A549 (cell line): ENCODE measurements at regions of chr5 and their contacts with region 1.

Region 1: DNA sequence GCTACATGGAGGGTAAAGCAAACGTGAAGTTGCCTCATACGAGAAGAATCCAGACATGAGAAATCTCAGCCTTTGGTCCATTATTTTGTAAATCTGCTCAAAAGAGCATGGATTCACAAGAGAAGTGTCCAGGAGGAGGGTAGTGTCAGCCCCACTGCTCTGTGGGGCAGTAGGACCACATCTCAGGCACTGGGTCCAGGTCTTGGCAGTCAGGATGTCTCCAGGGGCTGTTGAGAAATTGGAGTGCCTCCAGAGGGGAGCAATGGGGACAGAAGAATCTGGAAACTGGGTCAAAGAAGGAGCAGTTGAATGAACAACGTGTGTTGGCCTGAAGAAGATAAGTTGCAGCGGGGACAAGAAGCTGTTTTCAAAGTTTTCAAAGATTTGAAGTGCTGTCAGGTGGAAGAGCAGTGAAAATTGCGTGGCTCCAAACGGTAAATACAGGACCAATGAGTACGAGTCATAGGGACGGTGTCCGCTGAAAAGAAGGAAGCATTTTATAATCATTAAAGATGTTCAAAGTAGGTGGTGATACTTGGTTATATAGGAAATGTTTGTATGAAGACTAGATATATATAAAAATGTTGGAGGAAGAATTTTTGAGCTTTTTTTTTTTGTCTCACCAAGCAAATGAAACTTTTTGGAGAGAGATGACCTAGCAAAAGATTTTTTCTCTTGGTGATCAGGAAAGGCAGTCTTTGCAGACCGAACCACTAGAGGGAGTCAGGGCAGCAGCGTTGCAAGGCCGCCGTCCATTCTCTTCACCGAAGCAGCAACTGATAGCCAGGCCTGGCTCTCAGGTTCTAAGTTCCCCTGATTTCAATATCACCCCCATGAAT is 57.1 kb upstream of the ZBED3 start:
- DNase-seq: peak; percentile 55 to 85
- ATAC-seq: peak; percentile 90 to 97
- H3K4me3 ChIP-seq: no peak overlapping the region
- H3K27ac ChIP-seq: peak overlapping the region; percentile 58 to 80
- H3K4me1 ChIP-seq: peaks cover 28% of the 10 kb centered on the region
- CTCF ChIP-seq: peak; percentile 90
- EP300 ChIP-seq: no peak
- POLR2A ChIP-seq: no peak
- RAD21 ChIP-seq: peak; percentile 95 to 97

Region 2: GRCh38 chr5:77155179-77155785 is 11.1 kb after region 1 on chr5:
- CTCF ChIA-PET with region 1: interaction called, 31 read pairs
- POLR2A ChIA-PET with region 1: no interaction called
- DNase-seq: no peak
- ATAC-seq: no peak
- H3K4me3 ChIP-seq: no peak overlapping the region
- H3K27ac ChIP-seq: no peak overlapping the region
- H3K4me1 ChIP-seq: no peaks in the 10 kb centered on the region
- CTCF ChIP-seq: no peak
- EP300 ChIP-seq: no peak
- POLR2A ChIP-seq: no peak
- RAD21 ChIP-seq: no peak

Region 3: GRCh38 chr5:77175231-77175630 is 31.0 kb after region 1 on chr5:
- CTCF ChIA-PET with region 1: interaction called, 11 read pairs
- POLR2A ChIA-PET with region 1: no interaction called
- DNase-seq: no peak
- ATAC-seq: no peak
- H3K4me3 ChIP-seq: no peak overlapping the region
- H3K27ac ChIP-seq: peak overlapping the region; percentile 47 to 58; a peak in 5 of 6 replicates
- H3K4me1 ChIP-seq: peaks cover 37% of the 10 kb centered on the region
- CTCF ChIP-seq: no peak
- EP300 ChIP-seq: no peak
- POLR2A ChIP-seq: no peak
- RAD21 ChIP-seq: no peak

Region 4: DNA sequence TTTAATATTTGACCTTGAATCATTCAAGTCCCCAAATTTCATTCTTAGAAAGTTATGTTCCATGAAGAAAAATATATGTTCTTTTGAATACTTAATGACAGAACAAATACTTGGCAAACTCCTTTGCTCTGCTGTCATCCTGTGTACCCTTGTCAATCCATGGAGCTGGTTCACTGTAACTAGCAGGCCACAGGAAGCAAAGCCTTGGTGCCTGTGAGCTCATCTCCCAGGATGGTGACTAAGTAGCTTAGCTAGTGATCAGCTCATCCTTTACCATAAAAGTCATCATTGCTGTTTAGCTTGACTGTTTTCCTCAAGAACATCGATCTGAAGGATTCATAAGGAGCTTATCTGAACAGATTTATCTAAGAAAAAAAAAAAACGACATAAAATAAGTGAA is 282.5 kb after region 1 on chr5:
- CTCF ChIA-PET with region 1: interaction called, 15 read pairs
- POLR2A ChIA-PET with region 1: no interaction called
- DNase-seq: peak; percentile 13 to 39
- ATAC-seq: peak; percentile 66 to 68; a peak in 4 of 6 replicates
- H3K4me3 ChIP-seq: no peak overlapping the region
- H3K27ac ChIP-seq: peak overlapping the region; percentile 23 to 52; a peak in 4 of 6 replicates
- H3K4me1 ChIP-seq: peaks cover 35% of the 10 kb centered on the region
- CTCF ChIP-seq: no peak
- EP300 ChIP-seq: no peak
- POLR2A ChIP-seq: no peak
- RAD21 ChIP-seq: no peak

Region 5: GRCh38 chr5:77491783-77492652 is 347.8 kb after region 1 on chr5 and contains the start of gene WDR41:
- CTCF ChIA-PET with region 1: interaction called, 11 read pairs
- POLR2A ChIA-PET with region 1: interaction called, 4 read pairs
- DNase-seq: peak; percentile 78 to 92
- ATAC-seq: peak; percentile 98
- H3K4me3 ChIP-seq: peak within 1 kb of the TSS; percentile 61
- H3K27ac ChIP-seq: peak within 1 kb of the TSS; percentile 83 to 97
- H3K4me1 ChIP-seq: peaks cover 13% of the 10 kb centered on the region; the same call in 2 of the 3 replicates
- CTCF ChIP-seq: peak; percentile 89
- EP300 ChIP-seq: no peak
- POLR2A ChIP-seq: peak; percentile 56
- RAD21 ChIP-seq: peak; percentile 58 to 79
- polyA plus RNA-seq, gene WDR41: 88.5 and 89.5 TPM in 2 replicates